Activated naive CD4-positive, alpha-beta T cell treated with anti-CD3 and anti-CD28 coated beads for 36 hours (primary cell): ENCODE measurements at regions of chr6 and their contacts with region 1.

Region 1: DNA sequence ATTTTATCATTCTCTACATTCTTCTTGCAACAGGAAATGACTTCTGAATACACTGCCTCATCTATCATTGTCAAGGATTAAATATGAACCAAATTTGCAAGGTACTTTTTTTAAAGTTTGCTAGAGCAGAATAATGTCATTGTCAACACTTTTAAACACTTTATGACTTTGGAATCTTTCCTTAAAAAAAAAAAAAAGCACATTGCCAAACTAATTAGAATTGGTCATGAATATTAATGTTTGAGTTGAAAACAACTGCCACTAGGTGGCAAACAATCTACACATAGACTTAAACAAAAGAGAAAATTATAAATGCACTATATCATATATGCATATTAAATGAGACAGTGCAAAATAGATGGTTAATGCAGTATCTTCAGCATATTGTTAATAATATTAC is 32.5 kb upstream of the TMEM244 start:
- DNase-seq: no peak
- H3K4me3 Mint-ChIP-seq: no peak overlapping the region
- H3K27ac Mint-ChIP-seq: no peak overlapping the region
- H3K4me1 Mint-ChIP-seq: peaks cover 12% of the 10 kb centered on the region
- H3K27me3 Mint-ChIP-seq: peaks cover 6% of the 10 kb centered on the region

Region 2: GRCh38 chr6:129801909-129802308 is 91.7 kb before region 1 on chr6:
- CTCF ChIA-PET with region 1: no interaction called
- intact Hi-C with region 1: no loop called
- DNase-seq: no peak
- H3K4me3 Mint-ChIP-seq: no peak overlapping the region
- H3K27ac Mint-ChIP-seq: no peak overlapping the region
- H3K4me1 Mint-ChIP-seq: no peaks in the 10 kb centered on the region
- H3K27me3 Mint-ChIP-seq: peaks cover 8% of the 10 kb centered on the region

Region 3: DNA sequence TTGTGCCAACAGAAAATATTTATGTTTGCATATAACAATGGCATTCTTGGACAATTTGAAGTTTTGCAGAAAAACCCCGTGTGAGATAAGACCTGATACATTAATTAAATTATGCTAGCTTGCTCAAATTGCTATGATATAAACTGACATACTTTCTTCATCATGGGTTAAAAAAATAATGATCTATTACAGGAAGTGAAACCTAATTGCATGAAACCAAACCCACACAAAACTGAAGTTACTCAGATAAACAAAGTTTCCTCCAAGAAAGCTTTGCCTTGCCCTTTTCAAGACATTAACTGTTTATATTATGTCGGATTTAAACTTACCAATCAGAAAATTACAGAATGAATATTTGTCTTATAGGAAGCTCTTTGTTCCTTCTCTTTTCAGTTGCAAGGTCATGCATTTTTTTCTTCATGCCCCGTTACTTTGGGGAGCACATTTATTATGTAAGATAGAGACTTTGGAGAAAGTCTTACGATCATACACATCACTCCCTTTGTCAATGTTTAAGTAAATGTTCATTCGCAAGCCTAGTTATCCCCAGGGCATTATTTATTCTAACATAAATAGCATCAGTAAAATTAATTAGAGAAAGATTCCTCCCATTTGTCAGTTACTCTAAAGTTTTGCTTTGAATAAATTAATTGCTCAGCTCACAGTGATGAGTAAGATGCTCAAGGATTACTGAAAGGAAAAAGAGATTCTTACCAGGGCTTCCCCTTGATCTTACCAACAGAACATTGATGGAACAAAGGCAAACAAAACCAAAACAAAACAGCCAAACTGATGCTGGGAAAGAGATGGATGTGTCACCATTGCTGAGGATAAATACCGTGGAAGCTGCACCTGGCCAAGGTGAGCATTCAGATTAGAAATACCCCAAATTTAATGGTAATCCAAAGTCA is 17.8 kb before region 1 on chr6:
- CTCF ChIA-PET with region 1: interaction called, 10 read pairs
- intact Hi-C with region 1: no loop called
- DNase-seq: no peak
- H3K4me3 Mint-ChIP-seq: no peak overlapping the region
- H3K27ac Mint-ChIP-seq: no peak overlapping the region
- H3K4me1 Mint-ChIP-seq: peaks cover 13% of the 10 kb centered on the region
- H3K27me3 Mint-ChIP-seq: peaks cover 2% of the 10 kb centered on the region

Region 4: DNA sequence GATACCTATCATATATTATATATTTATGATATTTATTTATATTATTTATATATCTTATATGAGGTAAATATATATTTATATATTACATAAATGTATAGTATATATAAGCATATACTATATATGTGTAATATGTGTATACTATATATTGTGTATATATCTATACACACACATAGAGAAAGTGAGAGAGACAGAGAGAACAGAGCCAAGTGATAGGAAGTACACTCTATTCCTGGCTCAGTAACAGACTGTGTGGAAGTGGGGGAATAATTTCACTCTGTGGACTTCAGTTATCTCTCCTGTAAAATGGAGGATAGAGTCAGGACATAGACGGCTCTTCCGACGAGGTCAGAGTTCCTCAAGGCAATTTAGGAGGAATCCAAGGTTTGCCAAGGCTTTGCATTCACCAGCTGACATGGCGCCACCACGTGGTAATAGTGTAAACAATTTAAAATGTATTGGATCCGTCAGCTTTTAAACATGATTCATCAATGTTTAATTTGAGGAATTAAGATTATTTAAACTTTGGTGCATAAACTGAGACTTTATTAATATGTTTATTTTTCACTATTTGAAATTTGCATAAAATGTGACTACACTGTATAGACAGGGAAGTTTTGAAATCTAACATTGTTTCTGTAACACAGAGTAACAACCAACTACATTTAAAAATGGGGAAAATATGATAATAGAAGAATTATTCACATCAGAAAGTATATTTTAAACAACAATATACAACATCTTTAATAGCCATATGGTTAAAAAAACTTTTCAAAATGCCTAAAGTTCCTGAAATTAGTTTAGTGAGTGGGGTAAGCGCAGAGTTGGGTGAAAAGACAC is 42.9 kb after region 1 on chr6:
- CTCF ChIA-PET with region 1: no interaction called
- intact Hi-C with region 1: loop called (anchors 1 kb)
- DNase-seq: peak; percentile 63
- H3K4me3 Mint-ChIP-seq: no peak overlapping the region
- H3K27ac Mint-ChIP-seq: no peak overlapping the region
- H3K4me1 Mint-ChIP-seq: peaks cover 2% of the 10 kb centered on the region
- H3K27me3 Mint-ChIP-seq: peaks cover 3% of the 10 kb centered on the region